G401 (cell line): ENCODE measurements at regions of chr7 and their contacts with region 1.

Region 1: GRCh38 chr7:13898967-13899670 is 90.3 kb downstream of the ETV1 start:
- DNase-seq: peak; percentile 91

Region 2: GRCh38 chr7:13860734-13861133 is 38.4 kb before region 1 on chr7:
- in situ Hi-C with region 1: loop called (anchors 5 kb)
- DNase-seq: no peak